OCI-LY7 (cell line): ENCODE measurements at regions of chr2 and their contacts with region 1.

Region 1: GRCh38 chr2:232773815-232774214 is 2.5 kb downstream of the KCNJ13 start:
- DNase-seq: no peak
- H3K4me3 ChIP-seq: no peak overlapping the region
- H3K27ac ChIP-seq: no peak overlapping the region
- H3K4me1 ChIP-seq: peaks cover 28% of the 10 kb centered on the region
- CTCF ChIP-seq: no peak

Region 2: GRCh38 chr2:232623783-232624727 is 149.8 kb before region 1 on chr2:
- CTCF ChIA-PET with region 1: no interaction called
- POLR2A ChIA-PET with region 1: no interaction called
- intact Hi-C with region 1: no loop called
- DNase-seq: no peak
- H3K4me3 ChIP-seq: no peak overlapping the region
- H3K27ac ChIP-seq: no peak overlapping the region
- H3K4me1 ChIP-seq: no peaks in the 10 kb centered on the region
- CTCF ChIP-seq: no peak

Region 3: DNA sequence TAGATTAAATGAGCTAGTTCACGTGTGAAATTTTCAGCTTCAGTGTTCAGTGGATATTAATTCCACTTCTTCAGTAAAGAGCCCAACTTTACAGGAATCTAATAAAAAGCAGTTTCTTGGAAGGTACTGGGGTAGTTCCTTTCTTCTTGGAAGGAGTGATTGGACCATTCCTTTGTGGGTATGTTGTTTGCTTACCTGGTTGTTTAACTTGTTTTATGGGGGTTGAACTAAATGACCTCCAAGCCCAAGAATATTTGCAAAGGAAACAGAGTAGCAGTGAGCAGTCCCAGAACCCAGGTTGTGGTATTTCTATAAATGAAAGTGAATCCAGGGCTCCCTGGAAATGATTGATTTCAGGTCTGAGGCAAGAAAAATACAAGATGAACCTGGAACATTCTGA is 28.9 kb before region 1 on chr2:
- CTCF ChIA-PET with region 1: no interaction called
- POLR2A ChIA-PET with region 1: interaction called, 3 read pairs
- intact Hi-C with region 1: loop called (anchors 1 kb)
- DNase-seq: no peak
- H3K4me3 ChIP-seq: no peak overlapping the region
- H3K27ac ChIP-seq: no peak overlapping the region
- H3K4me1 ChIP-seq: no peaks in the 10 kb centered on the region
- CTCF ChIP-seq: no peak

Region 4: DNA sequence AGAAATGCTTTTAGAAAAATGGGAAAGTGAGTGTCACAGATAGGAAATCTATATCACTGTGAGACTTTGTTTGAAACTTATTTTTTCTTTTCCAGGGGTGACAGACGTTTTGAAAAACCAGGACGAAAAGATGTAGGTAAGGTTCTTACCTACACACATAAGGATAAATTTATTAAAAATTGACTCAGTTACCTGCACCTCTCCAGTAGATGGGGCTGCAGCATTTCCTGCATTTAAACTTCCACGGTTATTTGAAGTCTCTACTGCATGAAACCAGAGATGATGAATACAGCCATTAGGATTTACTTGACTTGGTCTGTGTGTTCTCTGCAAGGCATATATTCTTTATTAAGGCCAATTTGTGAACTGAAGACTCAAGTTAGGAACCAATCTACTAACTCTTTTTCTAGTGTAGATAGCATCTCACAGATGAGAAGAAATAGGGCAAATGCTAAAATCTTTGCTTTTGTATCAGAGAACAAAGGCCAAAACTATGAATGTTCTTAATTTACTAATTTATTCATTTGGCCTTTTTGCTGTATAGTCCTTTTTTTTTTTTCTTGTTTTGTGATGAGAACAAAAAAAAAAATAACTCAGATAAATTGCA is 12.4 kb before region 1 on chr2:
- CTCF ChIA-PET with region 1: no interaction called
- POLR2A ChIA-PET with region 1: interaction called, 13 read pairs
- intact Hi-C with region 1: no loop called
- DNase-seq: peak; percentile 70
- H3K4me3 ChIP-seq: no peak overlapping the region
- H3K27ac ChIP-seq: no peak overlapping the region
- H3K4me1 ChIP-seq: no peaks in the 10 kb centered on the region
- CTCF ChIP-seq: peak; percentile 95

Region 5: GRCh38 chr2:232876078-232876977 is 102.5 kb after region 1 on chr2:
- CTCF ChIA-PET with region 1: no interaction called
- POLR2A ChIA-PET with region 1: no interaction called
- intact Hi-C with region 1: no loop called
- DNase-seq: peak; percentile 41
- H3K4me3 ChIP-seq: peak overlapping the region; percentile 63
- H3K27ac ChIP-seq: no peak overlapping the region
- H3K4me1 ChIP-seq: no peaks in the 10 kb centered on the region
- CTCF ChIP-seq: no peak

Region 6: DNA sequence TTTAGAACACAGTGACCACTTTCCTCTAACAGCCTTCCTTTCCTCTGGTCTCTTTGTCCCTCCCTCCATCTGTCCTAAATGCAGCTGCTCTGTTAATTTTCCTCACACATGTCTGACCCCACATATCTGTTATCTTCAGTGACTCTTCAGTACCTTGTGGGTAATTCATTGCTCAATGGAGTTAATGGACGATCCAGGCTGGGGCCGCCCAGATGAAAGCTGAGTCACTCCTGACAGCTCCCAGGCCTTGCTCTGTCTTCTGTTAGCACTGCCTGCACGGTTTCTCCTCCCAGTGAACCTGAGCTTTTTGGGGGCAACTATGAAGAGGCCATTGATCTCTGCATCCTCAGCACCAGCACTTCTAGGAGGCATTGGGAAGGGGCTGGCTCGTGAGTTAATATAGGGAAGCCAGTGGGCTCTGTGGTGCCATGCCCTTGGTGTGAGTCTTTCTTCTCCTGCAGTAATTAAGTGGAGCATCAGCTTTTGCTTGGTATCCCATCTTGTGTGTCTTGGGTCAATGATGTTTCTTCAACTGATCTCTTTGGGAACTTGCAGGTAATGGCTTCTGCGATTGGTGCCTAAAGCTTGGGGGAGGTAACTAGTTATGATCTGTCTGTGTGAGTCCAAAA is 163.6 kb after region 1 on chr2:
- CTCF ChIA-PET with region 1: no interaction called
- POLR2A ChIA-PET with region 1: no interaction called
- intact Hi-C with region 1: no loop called
- DNase-seq: no peak
- H3K4me3 ChIP-seq: no peak overlapping the region
- H3K27ac ChIP-seq: no peak overlapping the region
- H3K4me1 ChIP-seq: no peaks in the 10 kb centered on the region
- CTCF ChIP-seq: no peak